ENCODE measurements at regions of chr1 and their contacts with region 1.

Region 1: DNA sequence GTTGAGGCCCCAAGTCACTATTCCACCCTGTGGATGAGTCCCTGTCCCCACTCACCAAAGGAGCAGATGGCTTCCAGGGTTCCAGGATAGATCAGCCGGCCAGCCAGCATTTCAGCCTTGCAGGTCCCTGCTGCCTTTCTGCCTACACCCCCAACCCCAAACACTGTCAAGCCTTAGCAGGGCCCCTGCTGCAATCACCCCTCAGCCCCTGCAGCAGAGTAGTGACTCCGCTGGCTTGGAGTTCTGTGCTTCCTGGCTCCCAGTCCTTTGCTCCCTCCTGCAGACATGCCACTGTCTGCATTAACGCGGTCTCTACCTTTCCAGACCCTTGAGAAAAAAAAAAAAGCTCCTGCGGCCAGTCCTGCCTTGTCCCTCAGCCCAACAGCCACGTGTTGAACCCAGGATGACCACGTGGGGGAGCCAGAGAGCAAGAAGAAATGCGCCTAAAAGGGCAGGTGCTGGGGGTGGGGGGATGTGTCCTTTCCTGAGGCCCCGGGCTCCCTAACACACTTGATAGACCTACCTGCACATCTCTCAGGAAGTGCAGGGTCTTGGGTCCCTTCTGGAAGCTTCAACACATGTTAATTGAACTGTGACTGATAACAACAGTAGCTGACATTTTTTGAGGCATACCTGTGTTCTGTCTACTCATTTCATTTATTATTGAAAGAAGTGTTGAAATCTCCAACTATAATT is 37.4 kb downstream of the RASSF5 start:
- DNase-seq: peak; percentile 72 to 83
- ATAC-seq: peak; percentile 82 to 89 (median 88)
- H3K4me3 ChIP-seq: no peak overlapping the region
- H3K27ac ChIP-seq: no peak overlapping the region
- H3K4me1 ChIP-seq: no peaks in the 10 kb centered on the region
- H3K27me3 ChIP-seq: no peaks in the 10 kb centered on the region
- CTCF ChIP-seq: peak; percentile 80

Region 2: DNA sequence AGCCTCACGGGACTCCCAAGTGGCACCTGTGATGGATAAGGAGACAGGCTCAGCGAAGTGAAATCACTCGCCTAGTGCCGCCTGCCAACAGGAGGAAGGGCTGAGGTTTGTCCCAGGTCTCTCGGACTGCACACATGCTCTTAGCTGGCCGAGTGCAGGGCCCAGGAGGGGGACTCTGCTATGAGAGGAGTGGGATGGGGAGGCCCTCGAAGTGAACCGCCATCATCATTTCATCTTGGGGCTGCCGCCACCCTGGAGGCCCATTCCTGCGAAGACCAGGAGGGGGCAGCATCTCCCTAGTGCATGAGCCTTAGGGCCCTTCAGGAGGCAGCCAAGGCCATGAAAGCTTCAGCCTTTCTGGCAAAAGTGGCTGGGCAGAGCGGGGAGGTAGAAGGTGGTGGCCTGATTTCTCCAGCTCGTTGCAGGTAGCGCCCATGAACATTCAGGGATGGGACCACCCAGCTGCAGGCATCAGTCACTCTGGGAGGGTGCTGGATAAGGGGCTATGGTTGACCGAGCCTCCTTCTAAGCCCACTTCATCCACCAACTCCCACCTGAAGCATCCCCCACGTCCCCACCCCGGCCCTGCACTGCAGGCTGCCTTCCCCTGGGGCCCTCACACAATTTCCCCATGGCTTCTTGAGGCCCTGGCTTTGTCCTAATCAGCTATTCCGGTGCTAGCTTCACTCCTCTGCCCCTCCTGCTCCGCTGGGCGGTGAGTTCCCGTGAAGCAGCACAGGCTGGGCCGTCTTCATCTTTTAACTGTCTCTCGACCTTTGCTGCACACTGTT is 54.5 kb before region 1 on chr1:
- intact Hi-C with region 1: loop called in 1 of 2 experiments (anchors 5 kb)
- DNase-seq: peak; percentile 70 to 85
- ATAC-seq: peak; percentile 92 to 98 (median 94)
- H3K4me3 ChIP-seq: no peak overlapping the region
- H3K27ac ChIP-seq: no peak overlapping the region
- H3K4me1 ChIP-seq: no peaks in the 10 kb centered on the region
- H3K27me3 ChIP-seq: no peaks in the 10 kb centered on the region
- CTCF ChIP-seq: peak; percentile 95

Region 3: DNA sequence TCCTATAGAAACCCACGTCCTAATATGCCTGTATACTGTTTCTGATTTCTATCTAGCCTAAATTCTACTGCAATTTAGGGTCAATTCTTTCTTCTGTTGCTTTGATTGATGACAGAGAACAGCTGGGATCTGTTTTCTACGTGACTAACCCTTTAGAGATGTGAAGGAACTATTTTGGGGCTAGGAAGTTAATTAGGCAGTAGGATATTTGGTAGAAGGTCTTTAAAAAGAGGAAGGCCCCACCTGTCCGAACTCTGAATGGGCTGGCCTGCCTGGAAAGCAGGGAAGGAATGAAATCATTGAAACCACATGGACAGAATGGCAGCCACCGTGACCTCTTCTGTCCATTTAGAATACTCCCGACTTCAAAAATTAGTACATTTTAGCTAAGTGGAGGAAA is 46.5 kb after region 1 on chr1:
- intact Hi-C with region 1: no loop called
- DNase-seq: no peak
- ATAC-seq: no peak
- H3K4me3 ChIP-seq: no peak overlapping the region
- H3K27ac ChIP-seq: peak overlapping the region; percentile 49
- H3K4me1 ChIP-seq: peaks cover 22% of the 10 kb centered on the region
- H3K27me3 ChIP-seq: no peaks in the 10 kb centered on the region
- CTCF ChIP-seq: no peak